ENCODE measurements at regions of chr15 and their contacts with region 1.

Region 1: GRCh38 chr15:75309711-75310110 is 26.2 kb upstream of the COMMD4 start:
- DNase-seq: no peak
- ATAC-seq: no peak
- H3K4me3 Mint-ChIP-seq: no peak overlapping the region
- H3K27ac Mint-ChIP-seq: no peak overlapping the region
- H3K4me1 Mint-ChIP-seq: peaks cover 3% of the 10 kb centered on the region
- H3K27me3 Mint-ChIP-seq: peaks cover 16% of the 10 kb centered on the region

Region 2: GRCh38 chr15:75229191-75230015 is 80.3 kb before region 1 on chr15:
- CTCF ChIA-PET with region 1: no interaction called
- POLR2A ChIA-PET with region 1: no interaction called
- intact Hi-C with region 1: loop called in 1 of 2 experiments (anchors 5 kb)
- DNase-seq: no peak
- ATAC-seq: no peak
- H3K4me3 Mint-ChIP-seq: no peak overlapping the region
- H3K27ac Mint-ChIP-seq: no peak overlapping the region
- H3K4me1 Mint-ChIP-seq: no peaks in the 10 kb centered on the region
- H3K27me3 Mint-ChIP-seq: peaks cover 11% of the 10 kb centered on the region